ENCODE measurements at regions of chr1 and their contacts with region 1.

Region 1: GRCh38 chr1:165898837-165899236 is 71.4 kb downstream of the UCK2 start:
- DNase-seq: peak; percentile 100
- ATAC-seq: peak; percentile 72
- H3K4me3 ChIP-seq: no peak overlapping the region
- H3K27ac ChIP-seq: peak overlapping the region; percentile 97
- H3K4me1 ChIP-seq: peaks cover 62% of the 10 kb centered on the region
- H3K27me3 ChIP-seq: no peaks in the 10 kb centered on the region
- CTCF ChIP-seq: no peak
- POLR2A ChIP-seq: peak; percentile 59; the same call in 1 of the 2 replicates
- RAD21 ChIP-seq: no peak; the same call in none of the 2 replicates

Region 2: GRCh38 chr1:165630629-165631341 is 268.1 kb before region 1 on chr1 and contains the start of gene MGST3:
- CTCF ChIA-PET with region 1: no interaction called
- POLR2A ChIA-PET with region 1: no interaction called
- dilution Hi-C with region 1: no loop called
- in situ Hi-C with region 1: no loop called
- intact Hi-C with region 1: loop called (anchors 2 kb)
- DNase-seq: peak; percentile 95
- ATAC-seq: peak; percentile 93
- H3K4me3 ChIP-seq: peak within 1 kb of the TSS; percentile 74
- H3K27ac ChIP-seq: peak within 1 kb of the TSS; percentile 88
- H3K4me1 ChIP-seq: peaks cover 2% of the 10 kb centered on the region
- H3K27me3 ChIP-seq: no peaks in the 10 kb centered on the region
- CTCF ChIP-seq: no peak
- POLR2A ChIP-seq: peak; percentile 42; the same call in 1 of the 2 replicates
- RAD21 ChIP-seq: no peak
- total RNA-seq, gene MGST3: 132 and 159 TPM in 2 replicates

Region 3: GRCh38 chr1:165686971-165687433 is 211.8 kb before region 1 on chr1:
- CTCF ChIA-PET with region 1: no interaction called
- POLR2A ChIA-PET with region 1: no interaction called
- dilution Hi-C with region 1: no loop called
- in situ Hi-C with region 1: no loop called
- intact Hi-C with region 1: no loop called
- DNase-seq: no peak
- ATAC-seq: no peak
- H3K4me3 ChIP-seq: no peak overlapping the region
- H3K27ac ChIP-seq: no peak overlapping the region
- H3K4me1 ChIP-seq: peaks cover 2% of the 10 kb centered on the region; the same call in 1 of the 2 replicates
- H3K27me3 ChIP-seq: no peaks in the 10 kb centered on the region
- CTCF ChIP-seq: no peak
- POLR2A ChIP-seq: no peak
- RAD21 ChIP-seq: no peak

Region 4: DNA sequence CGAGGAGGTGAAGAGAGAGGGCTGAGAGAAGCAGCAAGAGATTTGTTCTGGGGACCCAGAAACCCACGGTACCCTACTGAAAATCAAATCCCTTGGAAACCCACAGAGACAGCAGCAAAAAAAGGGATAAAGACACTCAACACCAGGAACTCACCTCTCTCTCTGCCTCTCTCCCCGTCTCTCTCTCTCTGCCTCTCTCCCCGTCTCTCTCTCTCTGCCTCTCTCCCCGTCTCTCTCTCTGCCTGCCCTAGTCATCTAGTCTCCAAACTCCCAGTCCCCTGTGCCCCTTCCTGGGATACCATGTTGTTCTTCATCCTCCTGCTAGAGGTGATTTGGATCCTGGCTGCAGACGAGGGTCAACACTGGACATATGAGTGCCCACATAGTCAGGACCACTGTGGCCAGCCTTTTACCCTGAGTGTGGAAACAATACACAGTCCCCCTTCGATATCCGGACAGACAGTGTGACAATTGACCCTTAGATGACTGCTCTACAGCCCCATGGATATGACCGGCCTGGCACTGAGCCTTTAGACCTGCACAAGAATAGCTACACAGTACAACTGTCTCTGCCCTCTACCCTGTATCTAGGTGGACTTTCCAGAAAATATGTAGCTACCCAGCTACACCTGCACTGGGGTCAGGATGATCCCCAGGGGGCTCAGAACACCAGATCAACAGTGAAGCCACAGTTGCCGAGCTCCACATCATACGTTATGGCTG is 190.7 kb before region 1 on chr1:
- CTCF ChIA-PET with region 1: no interaction called
- POLR2A ChIA-PET with region 1: no interaction called
- dilution Hi-C with region 1: no loop called
- in situ Hi-C with region 1: no loop called
- intact Hi-C with region 1: no loop called
- DNase-seq: no peak
- ATAC-seq: no peak
- H3K4me3 ChIP-seq: no peak overlapping the region
- H3K27ac ChIP-seq: no peak overlapping the region
- H3K4me1 ChIP-seq: no peaks in the 10 kb centered on the region
- H3K27me3 ChIP-seq: peaks cover 17% of the 10 kb centered on the region
- CTCF ChIP-seq: no peak
- POLR2A ChIP-seq: no peak
- RAD21 ChIP-seq: no peak

Region 5: GRCh38 chr1:165768513-165769394 is 130.1 kb before region 1 on chr1 and contains the start of gene TMCO1:
- CTCF ChIA-PET with region 1: interaction called, 4 read pairs
- POLR2A ChIA-PET with region 1: interaction called, 5 read pairs
- dilution Hi-C with region 1: no loop called
- in situ Hi-C with region 1: no loop called
- intact Hi-C with region 1: loop called (anchors 2 kb)
- DNase-seq: peak; percentile 99
- ATAC-seq: peak; percentile 91
- H3K4me3 ChIP-seq: peak within 1 kb of the TSS; percentile 80
- H3K27ac ChIP-seq: peak within 1 kb of the TSS; percentile 95
- H3K4me1 ChIP-seq: peaks cover 7% of the 10 kb centered on the region
- H3K27me3 ChIP-seq: no peaks in the 10 kb centered on the region
- CTCF ChIP-seq: peak; percentile 22
- POLR2A ChIP-seq: peak; percentile 91
- RAD21 ChIP-seq: peak; percentile 44
- total RNA-seq, gene TMCO1: 86.4 and 121 TPM in 2 replicates

Region 6: DNA sequence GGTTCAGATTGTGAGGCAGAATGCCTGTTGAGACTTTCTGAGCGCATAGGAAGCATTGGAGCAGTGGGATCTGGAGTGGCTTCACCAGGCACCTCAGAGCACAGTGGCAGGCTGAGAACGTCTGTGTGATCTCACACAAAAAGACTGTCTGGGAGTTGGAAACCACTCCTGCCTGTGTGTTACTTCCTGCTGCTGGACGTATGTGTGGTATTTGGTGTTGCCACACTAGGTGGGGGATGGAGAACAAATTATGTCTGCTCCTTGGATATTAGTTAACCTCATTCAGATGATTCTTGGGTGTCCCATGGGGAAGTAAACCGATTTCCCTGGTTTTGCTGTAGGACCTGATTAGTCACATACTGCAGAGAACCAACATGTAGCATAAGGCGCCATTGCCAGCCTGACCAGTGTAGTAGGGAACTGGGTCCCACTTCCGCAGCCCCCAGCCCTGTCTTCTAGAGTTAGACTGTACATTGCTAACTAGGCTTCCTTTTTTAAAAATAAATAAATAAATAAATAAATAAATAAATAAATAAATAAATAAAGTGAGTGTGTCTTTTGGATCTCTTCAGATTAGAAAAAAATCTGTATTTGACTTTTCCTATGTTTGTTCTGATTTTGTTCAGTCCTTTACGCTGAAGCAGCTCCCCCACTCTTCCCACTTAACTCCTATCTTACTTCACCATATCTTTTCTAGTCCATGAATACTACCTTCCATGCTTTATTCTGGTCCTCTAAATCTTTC is 44.6 kb before region 1 on chr1:
- CTCF ChIA-PET with region 1: no interaction called
- POLR2A ChIA-PET with region 1: no interaction called
- dilution Hi-C with region 1: no loop called
- in situ Hi-C with region 1: no loop called
- intact Hi-C with region 1: loop called (anchors 2 kb)
- DNase-seq: peak; percentile 95
- ATAC-seq: peak; percentile 88
- H3K4me3 ChIP-seq: no peak overlapping the region; the same call in 1 of the 2 replicates
- H3K27ac ChIP-seq: peak overlapping the region; percentile 98
- H3K4me1 ChIP-seq: peaks cover 26% of the 10 kb centered on the region
- H3K27me3 ChIP-seq: no peaks in the 10 kb centered on the region
- CTCF ChIP-seq: no peak
- POLR2A ChIP-seq: peak; percentile 79
- RAD21 ChIP-seq: peak; percentile 16; the same call in 1 of the 2 replicates

Measured in IMR-90 (cell line).